ENCODE measurements at regions of chr12 and their contacts with region 1.

Region 1: DNA sequence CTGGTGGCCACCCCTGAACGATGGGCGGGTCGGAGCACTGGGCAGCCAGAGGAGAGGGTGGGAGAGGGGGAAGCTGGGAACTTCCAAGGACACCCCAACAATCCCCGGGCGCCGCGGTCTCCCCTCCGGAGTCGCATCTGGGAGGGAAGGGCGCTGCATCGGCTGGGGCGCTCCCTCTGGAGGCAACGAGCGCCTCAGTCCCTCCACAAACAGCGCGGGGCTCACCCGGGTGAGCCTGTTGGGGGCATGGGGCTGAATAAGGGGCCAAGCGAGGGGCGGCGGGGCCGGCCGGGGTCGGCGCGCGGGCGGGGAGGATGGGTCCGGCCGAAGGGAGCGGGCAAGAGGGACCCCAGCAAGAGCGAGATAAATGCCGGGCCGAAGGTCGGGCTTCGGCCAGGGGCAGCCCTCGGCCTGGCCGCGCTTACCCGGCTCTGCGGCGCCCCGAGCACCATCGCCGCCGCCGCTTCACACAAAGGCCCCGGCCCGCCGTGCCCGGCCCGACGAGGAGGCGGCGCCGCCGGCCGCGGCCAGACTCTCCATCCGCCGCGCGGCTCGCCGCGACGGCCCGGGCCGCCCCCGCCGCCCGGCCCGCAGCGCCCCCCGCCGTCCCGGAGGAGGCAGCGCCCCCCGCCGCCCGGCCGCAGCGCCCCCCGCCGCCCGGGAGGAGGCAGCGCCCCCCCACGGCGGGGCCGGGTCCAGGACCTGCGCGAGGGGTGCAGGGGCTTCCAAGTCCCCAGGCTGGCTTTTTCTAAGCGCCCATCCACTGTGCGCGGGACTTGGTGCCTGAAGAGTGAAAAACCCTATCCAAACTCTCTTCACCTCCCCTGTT is at the start of gene ZBTB39:
- DNase-seq: peak; percentile 52
- H3K4me3 Mint-ChIP-seq: peak within 1 kb of the TSS; percentile 84
- H3K27ac Mint-ChIP-seq: peak within 1 kb of the TSS; percentile 60
- H3K4me1 Mint-ChIP-seq: peaks cover 27% of the 10 kb centered on the region
- H3K27me3 Mint-ChIP-seq: no peaks in the 10 kb centered on the region
- CTCF ChIP-seq: peak; percentile 43
- total RNA-seq, gene ZBTB39: 5.2 and 6.2 TPM in 2 replicates

Region 2: GRCh38 chr12:56751712-56752598 is 254.2 kb before region 1 on chr12 and contains the start of gene PRIM1:
- CTCF ChIA-PET with region 1: interaction called, 119 read pairs
- POLR2A ChIA-PET with region 1: no interaction called
- intact Hi-C with region 1: loop called (anchors 1 kb)
- DNase-seq: peak; percentile 80
- H3K4me3 Mint-ChIP-seq: peak within 1 kb of the TSS; percentile 87
- H3K27ac Mint-ChIP-seq: peak within 1 kb of the TSS; percentile 59
- H3K4me1 Mint-ChIP-seq: peaks cover 20% of the 10 kb centered on the region
- H3K27me3 Mint-ChIP-seq: no peaks in the 10 kb centered on the region
- CTCF ChIP-seq: peak; percentile 63
- total RNA-seq, gene PRIM1: 3.5 and 7.8 TPM in 2 replicates

Region 3: DNA sequence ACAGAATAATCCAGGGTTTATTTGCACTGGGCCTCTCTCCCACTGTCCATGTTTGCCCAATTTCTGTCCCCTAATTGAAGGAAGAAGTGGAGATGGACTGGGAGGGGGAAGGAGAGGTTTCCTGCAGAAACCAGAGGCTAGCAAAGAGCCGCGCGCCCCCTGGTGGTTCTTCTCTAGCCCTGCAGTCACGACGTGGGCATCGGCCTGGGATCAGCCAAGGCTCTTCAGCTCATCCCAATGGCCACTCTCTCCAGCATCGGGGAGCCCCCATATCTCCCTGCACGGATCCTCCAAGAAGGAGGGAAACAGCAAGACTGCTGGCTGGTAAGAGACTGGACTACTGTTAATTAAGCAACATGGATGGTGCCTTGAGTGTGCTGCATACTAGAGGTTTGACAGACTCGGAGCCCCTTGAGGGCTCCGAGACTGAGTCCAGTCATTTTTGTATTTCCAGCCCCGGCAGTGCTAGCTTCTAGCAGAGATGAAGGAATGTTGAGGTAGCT is 18.6 kb before region 1 on chr12:
- CTCF ChIA-PET with region 1: interaction called, 57 read pairs
- POLR2A ChIA-PET with region 1: interaction called, 3 read pairs
- intact Hi-C with region 1: no loop called
- DNase-seq: peak; percentile 84
- H3K4me3 Mint-ChIP-seq: no peak overlapping the region
- H3K27ac Mint-ChIP-seq: no peak overlapping the region
- H3K4me1 Mint-ChIP-seq: peaks cover 25% of the 10 kb centered on the region
- H3K27me3 Mint-ChIP-seq: no peaks in the 10 kb centered on the region
- CTCF ChIP-seq: peak; percentile 89

Region 4: DNA sequence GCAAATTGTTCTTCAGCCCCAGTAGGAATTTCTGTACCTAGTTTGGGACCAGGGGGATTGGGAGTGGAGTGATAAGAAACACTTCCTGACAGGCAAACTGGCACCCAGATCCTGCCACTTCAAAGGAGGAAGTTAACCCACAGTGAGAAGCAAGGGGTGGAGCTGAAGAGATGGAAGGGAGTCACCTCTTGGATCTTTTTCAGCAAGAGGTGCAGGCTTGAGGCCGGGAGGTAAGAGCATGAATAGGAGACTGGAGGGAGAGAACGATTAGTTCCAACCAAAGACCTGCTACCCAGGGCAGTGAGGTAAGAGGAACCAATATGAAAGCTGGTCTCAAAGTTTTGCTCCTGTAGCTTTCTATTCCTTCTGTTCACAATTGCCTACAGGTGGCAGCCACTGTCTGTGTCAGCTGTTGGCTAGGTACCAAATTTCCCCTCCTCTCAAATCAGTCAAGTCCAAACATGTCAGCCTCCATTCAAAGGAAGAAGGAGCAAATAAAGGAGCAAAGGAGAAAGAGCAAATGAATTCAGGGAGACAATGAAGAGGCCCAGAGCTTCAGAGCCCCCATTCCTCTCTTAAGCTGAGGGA is 25.0 kb after region 1 on chr12:
- CTCF ChIA-PET with region 1: interaction called, 11 read pairs
- POLR2A ChIA-PET with region 1: interaction called, 8 read pairs
- intact Hi-C with region 1: loop called (anchors 1 kb)
- DNase-seq: peak; percentile 81
- H3K4me3 Mint-ChIP-seq: peak overlapping the region; percentile 41
- H3K27ac Mint-ChIP-seq: peak overlapping the region; percentile 76
- H3K4me1 Mint-ChIP-seq: peaks cover 30% of the 10 kb centered on the region
- H3K27me3 Mint-ChIP-seq: peaks cover 21% of the 10 kb centered on the region
- CTCF ChIP-seq: no peak

Region 5: DNA sequence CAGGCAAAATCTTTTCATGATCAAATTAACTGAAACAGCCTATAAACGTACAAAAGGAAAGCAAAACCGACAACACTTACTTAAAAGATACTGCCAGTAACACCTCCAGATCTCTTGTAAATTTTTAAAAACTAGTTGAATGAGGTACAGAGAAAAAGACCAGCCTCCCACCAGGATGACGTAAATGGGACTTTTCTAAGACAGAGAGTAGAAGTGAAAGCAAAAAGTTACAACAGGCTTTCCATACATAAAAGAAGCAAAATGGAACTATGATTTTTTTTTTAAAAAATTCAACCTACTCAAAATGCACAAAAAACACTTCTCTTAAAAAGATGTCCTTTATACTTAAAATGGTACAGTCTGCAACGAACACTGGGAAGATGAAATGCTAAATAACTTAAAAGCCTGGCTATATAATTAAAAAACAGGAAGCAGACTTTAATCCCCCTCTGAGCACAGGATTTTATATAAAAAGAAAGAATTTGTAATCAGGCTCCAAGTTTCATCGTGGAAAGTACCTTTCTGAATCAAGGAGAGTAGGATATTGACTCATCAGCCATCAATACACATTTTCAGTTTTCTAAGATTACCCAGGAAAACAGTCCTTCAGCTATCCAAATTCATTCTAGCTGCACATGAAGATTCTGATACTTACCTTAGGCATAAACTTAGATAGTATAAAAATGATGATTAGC is 57.9 kb after region 1 on chr12:
- CTCF ChIA-PET with region 1: interaction called, 231 read pairs
- POLR2A ChIA-PET with region 1: interaction called, 8 read pairs
- intact Hi-C with region 1: loop called (anchors 1 kb)
- DNase-seq: no peak
- H3K4me3 Mint-ChIP-seq: no peak overlapping the region
- H3K27ac Mint-ChIP-seq: no peak overlapping the region
- H3K4me1 Mint-ChIP-seq: no peaks in the 10 kb centered on the region
- H3K27me3 Mint-ChIP-seq: no peaks in the 10 kb centered on the region
- CTCF ChIP-seq: no peak

Region 6: DNA sequence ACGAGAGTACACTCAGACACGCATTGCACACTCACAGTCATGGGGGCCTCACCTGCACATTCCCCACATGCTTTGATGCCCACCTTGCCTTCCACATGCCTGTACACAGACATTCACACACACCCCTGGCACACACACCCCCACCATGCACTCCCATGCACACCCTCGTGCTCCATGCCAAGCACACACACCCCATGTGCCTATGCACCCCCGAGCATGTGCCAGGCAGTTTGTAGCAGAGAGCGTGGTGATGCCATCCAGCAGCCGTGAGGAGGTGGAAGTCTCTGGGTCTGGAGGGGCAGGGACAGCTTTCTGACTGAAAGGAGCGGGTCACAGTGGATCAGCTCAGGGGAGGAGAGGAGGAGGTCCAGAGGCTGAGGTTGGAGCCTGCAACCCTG is 199.7 kb after region 1 on chr12:
- CTCF ChIA-PET with region 1: no interaction called
- POLR2A ChIA-PET with region 1: no interaction called
- intact Hi-C with region 1: no loop called
- DNase-seq: no peak
- H3K4me3 Mint-ChIP-seq: no peak overlapping the region
- H3K27ac Mint-ChIP-seq: no peak overlapping the region
- H3K4me1 Mint-ChIP-seq: no peaks in the 10 kb centered on the region
- H3K27me3 Mint-ChIP-seq: no peaks in the 10 kb centered on the region
- CTCF ChIP-seq: no peak

Region 7: GRCh38 chr12:57611108-57611809 is 605.1 kb after region 1 on chr12 and contains the start of gene ARHGEF25:
- CTCF ChIA-PET with region 1: no interaction called
- POLR2A ChIA-PET with region 1: no interaction called
- intact Hi-C with region 1: no loop called
- DNase-seq: no peak
- H3K4me3 Mint-ChIP-seq: peak within 1 kb of the TSS; percentile 38
- H3K27ac Mint-ChIP-seq: no peak within 1 kb of the TSS
- H3K4me1 Mint-ChIP-seq: no peaks in the 10 kb centered on the region
- H3K27me3 Mint-ChIP-seq: peaks cover 12% of the 10 kb centered on the region
- CTCF ChIP-seq: no peak
- total RNA-seq, gene ARHGEF25: 0.37 and 0.83 TPM in 2 replicates

Measured in MCF 10A (cell line).